Activated CD4-positive, alpha-beta T cell treated with anti-CD3 and anti-CD28 coated beads for 36 hours (primary cell): ENCODE measurements at regions of chr1 and their contacts with region 1.

Region 1: GRCh38 chr1:162035241-162035640 is 11.6 kb upstream of the OLFML2B start:
- DNase-seq: peak; percentile 45
- ATAC-seq: peak; percentile 21
- H3K4me3 Mint-ChIP-seq: no peak overlapping the region
- H3K27ac Mint-ChIP-seq: no peak overlapping the region
- H3K4me1 Mint-ChIP-seq: peaks cover 7% of the 10 kb centered on the region
- H3K27me3 Mint-ChIP-seq: peaks cover 4% of the 10 kb centered on the region

Region 2: GRCh38 chr1:161864577-161864976 is 170.7 kb before region 1 on chr1:
- CTCF ChIA-PET with region 1: interaction called, 9 read pairs
- POLR2A ChIA-PET with region 1: no interaction called
- intact Hi-C with region 1: loop called in 1 of 2 experiments (anchors 5 kb)
- DNase-seq: no peak
- ATAC-seq: no peak
- H3K4me3 Mint-ChIP-seq: no peak overlapping the region
- H3K27ac Mint-ChIP-seq: no peak overlapping the region
- H3K4me1 Mint-ChIP-seq: no peaks in the 10 kb centered on the region
- H3K27me3 Mint-ChIP-seq: no peaks in the 10 kb centered on the region

Region 3: DNA sequence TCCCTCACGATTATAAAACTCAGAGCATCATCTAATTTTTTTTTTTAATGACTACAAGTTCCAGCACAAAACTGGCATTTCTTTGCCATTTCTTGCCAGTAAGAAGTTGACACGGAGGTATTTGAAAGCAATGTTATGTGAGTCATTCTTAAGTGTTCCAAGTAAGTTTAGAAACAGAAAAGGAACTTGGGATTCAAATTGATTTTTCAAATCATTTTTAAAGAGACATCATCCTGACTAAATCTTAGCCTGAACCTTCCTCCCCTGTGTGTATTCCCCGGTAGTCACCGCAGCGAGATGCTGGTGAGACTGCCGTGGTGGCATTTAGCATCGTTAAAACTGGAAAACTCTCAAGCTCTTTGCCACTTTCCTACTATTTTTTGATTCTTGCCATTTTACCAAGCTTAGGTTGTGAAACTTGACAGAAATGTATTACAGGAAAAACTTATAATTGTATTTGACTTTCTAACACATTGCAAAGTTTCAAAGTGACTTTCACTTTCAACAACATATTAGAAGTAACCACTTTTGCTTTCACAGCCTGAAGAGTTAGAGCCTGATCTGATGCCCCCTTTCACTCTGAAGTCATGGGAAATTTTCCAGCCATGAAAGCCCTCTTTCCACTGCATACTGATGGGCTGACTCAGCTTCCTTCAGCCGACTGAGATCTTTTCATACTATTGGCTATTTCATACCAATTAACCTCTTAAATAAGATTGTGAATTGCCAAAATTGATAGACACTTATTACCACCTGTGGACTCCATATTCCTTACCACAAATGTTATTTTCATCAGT is 73.0 kb before region 1 on chr1:
- CTCF ChIA-PET with region 1: interaction called, 4 read pairs
- POLR2A ChIA-PET with region 1: no interaction called
- intact Hi-C with region 1: loop called in 1 of 2 experiments (anchors 5 kb)
- DNase-seq: peak; percentile 69
- ATAC-seq: peak; percentile 96
- H3K4me3 Mint-ChIP-seq: peak overlapping the region; percentile 57
- H3K27ac Mint-ChIP-seq: peak overlapping the region; percentile 95
- H3K4me1 Mint-ChIP-seq: peaks cover 59% of the 10 kb centered on the region
- H3K27me3 Mint-ChIP-seq: no peaks in the 10 kb centered on the region

Region 4: GRCh38 chr1:162046921-162047320 is 11.7 kb after region 1 on chr1:
- CTCF ChIA-PET with region 1: interaction called, 34 read pairs
- POLR2A ChIA-PET with region 1: no interaction called
- intact Hi-C with region 1: no loop called
- DNase-seq: no peak
- ATAC-seq: no peak
- H3K4me3 Mint-ChIP-seq: no peak overlapping the region
- H3K27ac Mint-ChIP-seq: no peak overlapping the region
- H3K4me1 Mint-ChIP-seq: no peaks in the 10 kb centered on the region
- H3K27me3 Mint-ChIP-seq: peaks cover 2% of the 10 kb centered on the region